Activated naive CD4-positive, alpha-beta T cell treated with anti-CD3 and anti-CD28 coated beads for 36 hours (primary cell): ENCODE measurements at regions of chr3 and their contacts with region 1.

Region 1: DNA sequence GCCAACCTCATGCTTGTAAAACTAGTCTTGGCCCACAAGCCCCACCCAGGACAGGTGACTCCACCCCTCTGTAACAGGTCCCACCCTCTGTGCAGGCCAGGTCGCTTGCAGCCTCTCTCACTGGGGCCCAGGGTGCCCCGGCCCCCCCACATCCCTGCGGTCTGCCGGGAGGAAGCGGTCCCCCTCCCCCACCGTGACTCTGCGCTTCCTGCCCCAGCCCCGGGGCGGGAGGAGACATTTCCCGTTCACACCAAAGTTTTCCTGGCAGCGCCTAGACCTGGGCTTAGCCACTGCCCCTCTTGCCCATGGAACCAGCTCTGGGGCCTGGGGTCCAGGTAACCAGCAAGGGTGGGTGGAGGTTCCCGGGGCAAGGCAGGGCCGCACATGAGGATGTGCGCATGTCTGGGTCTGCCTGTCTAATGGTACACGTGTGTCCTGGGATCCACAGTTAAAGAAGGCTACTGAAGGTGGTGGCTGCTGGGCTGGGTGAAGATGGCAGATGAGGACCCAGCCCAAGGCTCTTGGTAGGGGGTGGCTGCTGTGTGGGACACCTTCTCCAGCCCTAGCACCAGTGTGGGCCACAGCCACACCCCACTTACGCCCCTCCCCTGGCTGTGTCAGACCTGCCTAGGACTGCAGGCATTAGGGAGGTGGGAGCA is 8.4 kb downstream of the NBEAL2 start:
- DNase-seq: peak; percentile 94
- H3K4me3 Mint-ChIP-seq: peak overlapping the region; percentile 82
- H3K27ac Mint-ChIP-seq: peak overlapping the region; percentile 89
- H3K4me1 Mint-ChIP-seq: peaks cover 50% of the 10 kb centered on the region
- H3K27me3 Mint-ChIP-seq: no peaks in the 10 kb centered on the region

Region 2: DNA sequence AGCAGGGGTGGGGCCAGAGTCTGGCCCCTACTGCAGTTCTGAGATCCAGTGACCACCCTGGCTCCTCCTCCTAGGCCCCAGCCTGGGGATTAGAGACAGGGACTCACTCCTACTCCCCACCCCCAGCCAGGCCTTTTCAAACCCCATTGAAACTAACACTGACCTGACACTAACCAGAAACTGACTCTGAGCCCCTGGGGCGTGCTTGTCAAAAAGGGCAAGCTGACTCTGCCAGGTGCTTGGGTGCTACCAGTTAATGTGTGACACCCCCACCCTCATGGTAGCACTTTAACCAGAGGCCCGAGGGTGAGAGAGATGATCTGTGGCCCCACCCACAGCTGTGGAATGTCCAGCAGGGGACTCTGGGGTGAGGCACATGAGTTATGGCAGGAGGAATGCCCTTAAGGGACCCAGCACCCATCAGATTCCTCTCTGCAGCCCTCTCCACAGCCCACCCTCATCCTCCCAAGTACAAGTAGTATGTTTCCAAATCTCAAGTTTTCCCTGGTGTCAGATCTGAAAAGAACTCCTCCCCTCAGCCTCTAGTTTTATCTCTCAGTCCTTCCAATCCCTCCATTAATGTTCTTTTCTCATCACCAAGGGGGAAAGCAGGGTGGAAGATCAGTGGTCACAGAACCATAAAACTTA is 109.0 kb before region 1 on chr3:
- CTCF ChIA-PET with region 1: no interaction called
- intact Hi-C with region 1: no loop called
- DNase-seq: no peak
- H3K4me3 Mint-ChIP-seq: no peak overlapping the region
- H3K27ac Mint-ChIP-seq: no peak overlapping the region
- H3K4me1 Mint-ChIP-seq: peaks cover 3% of the 10 kb centered on the region
- H3K27me3 Mint-ChIP-seq: peaks cover 28% of the 10 kb centered on the region

Region 3: DNA sequence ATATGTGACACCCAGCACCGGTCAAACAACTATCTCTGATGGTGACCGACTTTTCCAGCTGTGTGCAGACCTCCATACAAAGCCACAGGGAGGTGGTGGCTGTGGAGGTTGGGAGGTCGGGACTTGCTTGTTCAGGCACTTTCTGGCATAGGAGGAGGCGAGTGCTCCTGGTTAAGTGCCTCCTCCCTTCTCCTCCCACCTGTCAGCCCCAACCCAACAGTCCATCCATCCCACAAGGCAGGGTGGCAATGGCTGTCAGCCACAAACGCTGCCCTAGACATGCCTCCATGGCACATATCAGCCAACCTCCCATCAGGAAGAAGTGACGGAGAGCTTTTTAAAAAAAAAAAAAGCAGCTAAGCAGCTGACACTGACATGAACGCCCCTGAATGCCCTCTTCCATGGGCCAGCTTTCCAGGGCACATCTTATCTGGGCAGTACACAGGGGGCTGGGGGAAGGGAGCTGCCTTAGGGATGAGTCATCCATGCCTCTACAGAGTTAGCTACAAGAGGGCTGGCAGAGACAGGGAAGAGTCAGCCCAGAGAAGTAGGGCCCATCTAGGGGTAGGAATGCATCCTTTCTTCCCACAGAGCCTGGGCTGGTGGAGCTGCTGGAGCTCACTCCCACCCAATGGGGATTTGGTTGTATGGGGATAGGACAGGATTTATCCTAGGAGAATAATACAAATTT is 52.6 kb before region 1 on chr3:
- CTCF ChIA-PET with region 1: no interaction called
- intact Hi-C with region 1: no loop called
- DNase-seq: no peak
- H3K4me3 Mint-ChIP-seq: no peak overlapping the region
- H3K27ac Mint-ChIP-seq: no peak overlapping the region
- H3K4me1 Mint-ChIP-seq: peaks cover 53% of the 10 kb centered on the region
- H3K27me3 Mint-ChIP-seq: no peaks in the 10 kb centered on the region

Region 4: DNA sequence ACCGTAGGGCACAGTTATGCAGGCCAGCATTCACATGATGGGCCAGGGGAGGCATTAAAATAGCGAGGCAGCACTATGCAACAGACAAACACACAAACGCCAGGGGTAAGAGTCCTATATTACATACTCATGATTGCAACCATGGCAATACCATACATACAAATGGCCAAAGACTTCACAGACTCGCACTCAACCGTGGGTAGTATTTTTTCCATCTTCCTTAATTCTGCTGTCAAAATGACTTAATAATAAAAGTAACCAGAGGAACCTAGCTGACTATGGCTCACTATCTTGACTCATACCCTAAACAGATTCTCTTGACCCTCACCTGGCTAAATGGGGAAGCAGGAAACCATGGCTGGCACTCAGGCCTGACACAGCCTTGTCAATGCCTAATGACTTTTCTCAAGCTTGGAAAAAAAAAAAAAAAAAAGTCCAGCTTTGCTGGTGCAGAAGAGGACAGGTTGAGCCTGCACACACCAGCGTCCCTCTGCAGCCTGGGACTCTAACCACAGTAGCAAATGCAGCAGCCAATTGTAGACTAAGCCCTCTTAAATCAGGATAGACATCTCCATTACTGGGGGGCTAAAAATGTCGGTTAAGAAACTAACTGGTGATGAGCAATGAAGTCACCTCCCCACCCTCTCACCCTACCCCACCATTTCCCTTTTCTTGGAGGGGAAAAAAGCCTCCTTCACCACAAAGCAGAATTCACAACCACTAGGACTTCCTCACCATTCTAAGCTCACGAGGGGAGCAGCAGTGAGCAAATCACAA is 34.5 kb before region 1 on chr3:
- CTCF ChIA-PET with region 1: no interaction called
- intact Hi-C with region 1: loop called (anchors 5 kb)
- DNase-seq: no peak
- H3K4me3 Mint-ChIP-seq: no peak overlapping the region
- H3K27ac Mint-ChIP-seq: peak overlapping the region; percentile 56
- H3K4me1 Mint-ChIP-seq: peaks cover 82% of the 10 kb centered on the region
- H3K27me3 Mint-ChIP-seq: no peaks in the 10 kb centered on the region